ENCODE measurements at regions of chr10 and their contacts with region 1.

Region 1: GRCh38 chr10:113922787-113923570 is 68.5 kb downstream of the NHLRC2 start:
- DNase-seq: no peak
- ATAC-seq: peak in 3 of 4 donors; percentile 42 to 52 (median 43)
- H3K4me3 ChIP-seq: no peak overlapping the region
- H3K27ac ChIP-seq: no peak overlapping the region
- H3K4me1 ChIP-seq: no peaks in the 10 kb centered on the region
- H3K27me3 ChIP-seq: peaks cover 0 to 1% (median 0%) of the 10 kb centered on the region in 3 donors
- CTCF ChIP-seq: no peak

Region 2: GRCh38 chr10:113704637-113705343 is 218.2 kb before region 1 on chr10:
- intact Hi-C with region 1: loop called in 1 of 2 experiments (anchors 10 kb)
- DNase-seq: no peak
- ATAC-seq: peak in 2 of 4 donors; percentile 42 to 45
- H3K4me3 ChIP-seq: no peak overlapping the region
- H3K27ac ChIP-seq: no peak overlapping the region
- H3K4me1 ChIP-seq: no peaks in the 10 kb centered on the region
- H3K27me3 ChIP-seq: no peaks in the 10 kb centered on the region
- CTCF ChIP-seq: peak; percentile 58

Measured in psoas muscle (tissue), 8 donors.